Gastrocnemius medialis (tissue), 4 donors: ENCODE measurements at regions of chr11 and their contacts with region 1.

Region 1: DNA sequence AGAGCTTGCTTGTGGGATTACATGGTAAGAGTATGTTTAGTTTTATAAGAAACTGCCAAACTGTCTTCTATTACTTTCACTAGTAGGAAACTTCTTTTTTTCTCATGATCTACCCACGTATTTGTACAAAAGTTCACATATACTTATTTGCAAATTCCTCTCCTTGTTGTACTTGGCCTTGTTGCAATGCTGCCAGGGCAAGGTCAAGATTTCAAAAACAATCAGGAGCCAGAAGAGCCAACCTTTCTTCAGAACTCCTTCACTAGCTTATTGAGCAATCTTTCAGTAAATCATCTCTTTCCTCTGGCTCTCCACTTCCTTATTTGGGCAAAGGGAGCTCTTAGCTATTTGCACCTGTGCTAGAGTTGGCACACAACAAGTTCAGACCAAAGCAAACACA is 9.7 kb downstream of the SRSF8 start:
- DNase-seq: no peak
- ATAC-seq: no peak
- H3K4me3 ChIP-seq: no peak overlapping the region
- H3K27ac ChIP-seq: no peak overlapping the region
- H3K4me1 ChIP-seq: peaks cover 18 to 19% of the 10 kb centered on the region in 2 donors
- H3K27me3 ChIP-seq: no peaks in the 10 kb centered on the region
- CTCF ChIP-seq: no peak
- POLR2A ChIP-seq: no peak

Region 2: GRCh38 chr11:94997437-94997836 is 79.0 kb before region 1 on chr11:
- in situ Hi-C with region 1: no loop called
- intact Hi-C with region 1: no loop called
- DNase-seq: no peak
- ATAC-seq: no peak
- H3K4me3 ChIP-seq: no peak overlapping the region
- H3K27ac ChIP-seq: no peak overlapping the region
- H3K4me1 ChIP-seq: no peaks in the 10 kb centered on the region
- H3K27me3 ChIP-seq: no peaks in the 10 kb centered on the region
- CTCF ChIP-seq: no peak
- POLR2A ChIP-seq: no peak

Region 3: GRCh38 chr11:95138448-95138847 is 62.0 kb after region 1 on chr11:
- in situ Hi-C with region 1: loop called in 2 of 4 experiments (anchors 5 kb)
- intact Hi-C with region 1: no loop called
- DNase-seq: no peak
- ATAC-seq: peak; percentile 77 to 92
- H3K4me3 ChIP-seq: no peak overlapping the region
- H3K27ac ChIP-seq: no peak overlapping the region
- H3K4me1 ChIP-seq: peaks cover 7% of the 10 kb centered on the region in 2 donors
- H3K27me3 ChIP-seq: no peaks in the 10 kb centered on the region
- CTCF ChIP-seq: peak; percentile 17 to 49 (median 20)
- POLR2A ChIP-seq: no peak